ENCODE measurements at regions of chr14 and their contacts with region 1.

Region 1: DNA sequence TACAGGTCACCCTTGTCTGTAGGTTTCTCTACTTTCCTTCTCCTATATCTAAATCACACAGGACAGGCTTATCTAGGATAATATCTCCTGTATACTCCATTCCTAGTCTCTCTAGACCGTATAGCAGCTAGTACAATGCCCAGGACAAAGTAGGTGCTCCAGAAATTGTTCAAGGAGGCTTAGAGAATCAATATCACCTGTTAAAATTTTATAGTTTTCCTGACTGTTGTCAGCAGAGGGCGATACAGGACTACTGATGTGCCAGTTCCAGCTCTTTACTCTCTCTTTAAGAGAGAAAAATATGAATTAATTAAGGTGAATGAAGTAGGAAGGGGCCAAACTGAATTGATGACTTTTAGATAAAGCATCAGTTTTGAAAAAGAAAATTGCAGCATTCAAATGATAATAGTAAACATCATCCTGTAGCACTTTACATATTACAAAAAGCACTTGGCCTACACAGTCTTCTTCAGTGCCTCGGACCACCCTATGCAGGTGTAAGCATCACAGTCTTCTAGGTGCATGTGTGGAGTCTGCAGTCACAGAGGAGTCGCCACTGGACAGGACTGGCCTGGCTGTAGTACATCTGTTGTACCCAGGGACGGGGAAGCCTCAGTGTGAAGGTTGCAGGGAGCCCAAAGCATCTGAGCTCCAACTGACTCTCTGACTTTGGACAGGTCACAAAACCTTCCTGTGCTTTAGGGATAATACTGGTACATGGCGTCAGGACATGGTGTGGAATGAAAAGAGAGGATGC is 61.9 kb upstream of the MAX start:
- DNase-seq: no peak
- ATAC-seq: peak; percentile 47 to 52

Region 2: GRCh38 chr14:65824285-65824977 is 660.2 kb after region 1 on chr14:
- intact Hi-C with region 1: loop called (anchors 2 to 5 kb)
- DNase-seq: no peak
- ATAC-seq: peak; percentile 68 to 80

Region 3: DNA sequence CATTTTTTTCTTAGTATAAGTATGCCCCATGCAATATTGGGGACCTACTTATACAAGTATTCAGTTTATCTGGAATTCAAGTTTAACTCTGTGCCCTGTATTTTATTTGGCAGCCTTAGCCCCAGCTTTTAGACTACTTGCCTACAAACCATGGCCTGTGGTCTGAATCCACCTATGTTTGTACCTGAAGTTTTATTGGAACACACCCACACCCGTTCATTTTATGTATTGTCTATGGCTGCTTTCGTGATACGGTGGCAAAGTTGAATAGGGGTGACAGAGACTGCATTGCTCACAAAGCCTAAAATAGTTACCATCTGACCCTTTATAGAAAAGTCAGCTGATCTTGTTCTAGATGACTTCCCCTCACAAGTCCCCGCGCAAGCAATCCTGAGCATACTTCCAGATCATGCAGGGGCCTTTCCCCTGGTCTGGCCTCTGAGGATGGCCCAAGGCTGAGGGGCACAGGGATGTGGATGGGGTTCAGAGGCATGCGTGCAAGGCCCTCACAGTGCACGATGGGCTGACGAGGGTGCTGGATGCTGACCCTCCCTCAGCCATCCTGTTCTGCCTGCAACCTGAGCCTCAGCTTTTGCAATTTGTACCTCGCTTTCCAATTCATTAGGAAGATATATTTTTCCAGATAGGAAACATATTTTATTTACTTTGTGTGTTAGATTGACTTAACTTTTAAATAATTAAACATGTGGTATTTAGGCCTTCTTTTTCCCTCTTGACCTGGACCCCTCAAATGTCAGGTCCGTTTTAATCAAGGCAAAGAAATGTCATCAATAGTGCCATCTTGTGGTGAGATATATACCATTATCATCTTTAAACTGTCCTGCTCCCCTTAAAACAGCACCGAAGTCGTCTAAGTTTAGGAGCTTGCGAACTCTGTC is 794.7 kb after region 1 on chr14:
- intact Hi-C with region 1: loop called (anchors 5 to 10 kb)
- DNase-seq: no peak
- ATAC-seq: peak; percentile 40 to 55

Measured in left cardiac atrium (tissue), 4 donors.